Mammary epithelial cell (primary cell): ENCODE measurements at regions of chr11 and their contacts with region 1.

Region 1: GRCh38 chr11:9748361-9748970 is 84.6 kb downstream of the SWAP70 start:
- DNase-seq: peak; percentile 68
- H3K4me3 ChIP-seq: no peak overlapping the region
- H3K27ac ChIP-seq: peak overlapping the region; percentile 18
- H3K4me1 ChIP-seq: peaks cover 18% of the 10 kb centered on the region
- H3K27me3 ChIP-seq: no peaks in the 10 kb centered on the region
- CTCF ChIP-seq: peak; percentile 72 to 74

Region 2: GRCh38 chr11:9594267-9595046 is 154.0 kb before region 1 on chr11:
- CTCF ChIA-PET with region 1: no interaction called
- dilution Hi-C with region 1: loop called (anchors 10 kb)
- in situ Hi-C with region 1: no loop called
- intact Hi-C with region 1: no loop called
- DNase-seq: no peak
- H3K4me3 ChIP-seq: no peak overlapping the region
- H3K27ac ChIP-seq: no peak overlapping the region
- H3K4me1 ChIP-seq: no peaks in the 10 kb centered on the region
- H3K27me3 ChIP-seq: no peaks in the 10 kb centered on the region
- CTCF ChIP-seq: no peak

Region 3: GRCh38 chr11:9691865-9692264 is 56.6 kb before region 1 on chr11:
- CTCF ChIA-PET with region 1: interaction called, 3 read pairs
- dilution Hi-C with region 1: loop called (anchors 5 kb)
- in situ Hi-C with region 1: no loop called
- intact Hi-C with region 1: no loop called
- DNase-seq: peak; percentile 77
- H3K4me3 ChIP-seq: no peak overlapping the region
- H3K27ac ChIP-seq: peak overlapping the region; percentile 26
- H3K4me1 ChIP-seq: peaks cover 61% of the 10 kb centered on the region
- H3K27me3 ChIP-seq: no peaks in the 10 kb centered on the region
- CTCF ChIP-seq: no peak

Region 4: GRCh38 chr11:9774591-9775397 is 26.3 kb after region 1 on chr11:
- CTCF ChIA-PET with region 1: no interaction called
- dilution Hi-C with region 1: no loop called
- in situ Hi-C with region 1: no loop called
- intact Hi-C with region 1: no loop called
- DNase-seq: no peak
- H3K4me3 ChIP-seq: no peak overlapping the region
- H3K27ac ChIP-seq: no peak overlapping the region
- H3K4me1 ChIP-seq: peaks cover 5% of the 10 kb centered on the region
- H3K27me3 ChIP-seq: no peaks in the 10 kb centered on the region
- CTCF ChIP-seq: no peak